ENCODE measurements at regions of chr19 and their contacts with region 1.

Region 1: GRCh38 chr19:52397310-52398080 is at the start of gene ZNF528:
- DNase-seq: peak; percentile 85
- H3K4me3 Mint-ChIP-seq: peak within 1 kb of the TSS; percentile 86
- H3K27ac Mint-ChIP-seq: peak within 1 kb of the TSS; percentile 77
- H3K4me1 Mint-ChIP-seq: peaks cover 17% of the 10 kb centered on the region
- H3K27me3 Mint-ChIP-seq: peaks cover 1% of the 10 kb centered on the region
- total RNA-seq, gene ZNF528: 6.8 and 8.0 TPM in 2 replicates

Region 2: GRCh38 chr19:52296773-52297600 is 100.5 kb before region 1 on chr19 and contains the start of gene ZNF480:
- intact Hi-C with region 1: no loop called
- DNase-seq: peak; percentile 74
- H3K4me3 Mint-ChIP-seq: peak within 1 kb of the TSS; percentile 90
- H3K27ac Mint-ChIP-seq: peak within 1 kb of the TSS; percentile 97
- H3K4me1 Mint-ChIP-seq: peaks cover 17% of the 10 kb centered on the region
- H3K27me3 Mint-ChIP-seq: peaks cover 2% of the 10 kb centered on the region
- total RNA-seq, gene ZNF480: 3.5 and 4.8 TPM in 2 replicates

Region 3: GRCh38 chr19:52336117-52336790 is 61.2 kb before region 1 on chr19 and contains the start of gene ZNF610:
- intact Hi-C with region 1: loop called (anchors 2 kb)
- DNase-seq: peak; percentile 77
- H3K4me3 Mint-ChIP-seq: peak within 1 kb of the TSS; percentile 88
- H3K27ac Mint-ChIP-seq: peak within 1 kb of the TSS; percentile 91
- H3K4me1 Mint-ChIP-seq: peaks cover 5% of the 10 kb centered on the region
- H3K27me3 Mint-ChIP-seq: no peaks in the 10 kb centered on the region
- total RNA-seq, gene ZNF610: 0.29 and 0.36 TPM in 2 replicates

Region 4: GRCh38 chr19:52369559-52370340 is 27.7 kb before region 1 on chr19 and contains the start of gene ZNF880:
- intact Hi-C with region 1: loop called (anchors 2 kb)
- DNase-seq: peak; percentile 80
- H3K4me3 Mint-ChIP-seq: peak within 1 kb of the TSS; percentile 89
- H3K27ac Mint-ChIP-seq: peak within 1 kb of the TSS; percentile 91
- H3K4me1 Mint-ChIP-seq: peaks cover 6% of the 10 kb centered on the region
- H3K27me3 Mint-ChIP-seq: no peaks in the 10 kb centered on the region
- total RNA-seq, gene ZNF880: 5.4 and 12.5 TPM in 2 replicates